BJ (cell line): ENCODE measurements at regions of chr1 and their contacts with region 1.

Region 1: GRCh38 chr1:7667625-7668218 is 103.4 kb upstream of the VAMP3 start:
- DNase-seq: no peak
- H3K4me3 ChIP-seq: no peak overlapping the region
- H3K27me3 ChIP-seq: peaks cover 2% of the 10 kb centered on the region; the same call in 1 of the 2 replicates
- CTCF ChIP-seq: peak; percentile 100

Region 2: DNA sequence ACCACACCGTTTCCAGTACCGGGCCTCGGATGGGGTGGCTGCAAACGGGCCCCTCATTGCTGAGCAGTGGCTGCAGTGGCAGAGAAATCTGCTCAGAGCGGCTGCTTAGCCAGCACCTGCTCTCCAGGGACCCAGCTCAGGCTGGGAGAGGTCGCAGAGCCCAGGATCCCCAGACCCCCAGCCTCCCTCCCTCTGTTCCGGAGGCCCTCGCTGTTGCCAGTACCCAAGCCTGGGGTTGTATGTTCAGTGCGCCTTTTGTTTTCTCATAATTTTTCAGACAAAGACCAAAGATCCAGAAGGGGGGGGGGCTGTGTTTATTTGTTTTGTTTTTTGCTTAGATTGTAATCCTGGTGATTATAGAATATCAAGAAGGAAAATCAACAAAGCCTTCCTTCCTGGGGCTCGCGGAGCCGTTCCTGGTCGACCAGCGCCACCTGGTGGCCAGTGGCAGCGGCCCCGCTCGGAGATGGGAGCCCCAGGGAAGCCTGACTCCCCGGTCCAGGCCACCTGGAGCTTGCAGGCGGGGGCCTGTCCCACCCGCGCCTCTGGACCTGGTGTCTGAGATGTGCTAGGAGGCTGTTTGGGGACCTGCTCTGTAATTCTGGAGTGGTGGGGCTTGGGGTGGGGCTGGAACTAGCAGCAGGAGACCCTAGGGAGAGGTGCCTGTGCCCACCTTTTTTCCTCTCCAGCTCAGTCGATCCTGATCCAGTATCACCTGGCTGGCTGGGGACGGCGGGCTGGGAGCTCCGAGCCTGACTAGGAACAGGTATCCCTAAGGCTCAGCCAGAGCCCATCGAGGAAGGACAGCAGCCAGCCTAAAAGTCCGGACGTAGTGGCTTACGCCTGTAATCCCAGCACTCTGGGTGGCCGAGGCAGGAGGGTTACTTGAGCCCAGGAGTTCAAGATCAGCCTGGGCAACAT is 20.5 kb before region 1 on chr1:
- CTCF ChIA-PET with region 1: interaction called, 21 read pairs
- POLR2A ChIA-PET with region 1: no interaction called
- DNase-seq: no peak
- H3K4me3 ChIP-seq: no peak overlapping the region
- H3K27me3 ChIP-seq: peaks cover 2% of the 10 kb centered on the region
- CTCF ChIP-seq: peak; percentile 94

Region 3: GRCh38 chr1:7680207-7680954 is 12.7 kb after region 1 on chr1:
- CTCF ChIA-PET with region 1: interaction called, 113 read pairs
- POLR2A ChIA-PET with region 1: no interaction called
- DNase-seq: no peak
- H3K4me3 ChIP-seq: peak overlapping the region; percentile 71
- H3K27me3 ChIP-seq: peaks cover 3% of the 10 kb centered on the region; the same call in 1 of the 2 replicates
- CTCF ChIP-seq: no peak

Region 4: GRCh38 chr1:7704214-7705047 is 36.7 kb after region 1 on chr1:
- CTCF ChIA-PET with region 1: interaction called, 23 read pairs
- POLR2A ChIA-PET with region 1: interaction called, 3 read pairs
- DNase-seq: peak; percentile 11
- H3K4me3 ChIP-seq: peak overlapping the region; percentile 23
- H3K27me3 ChIP-seq: peaks cover 26% of the 10 kb centered on the region
- CTCF ChIP-seq: no peak

Region 5: GRCh38 chr1:7752512-7753417 is 85.0 kb after region 1 on chr1:
- CTCF ChIA-PET with region 1: interaction called, 431 read pairs
- POLR2A ChIA-PET with region 1: interaction called, 3 read pairs
- DNase-seq: peak; percentile 15
- H3K4me3 ChIP-seq: peak overlapping the region; percentile 23
- H3K27me3 ChIP-seq: no peaks in the 10 kb centered on the region; the same call in 1 of the 2 replicates
- CTCF ChIP-seq: peak; percentile 76

Region 6: GRCh38 chr1:7770997-7771822 is 103.5 kb after region 1 on chr1 and contains the start of gene VAMP3:
- CTCF ChIA-PET with region 1: interaction called, 22 read pairs
- POLR2A ChIA-PET with region 1: no interaction called
- DNase-seq: no peak
- H3K4me3 ChIP-seq: peak within 1 kb of the TSS; percentile 65
- H3K27me3 ChIP-seq: no peaks in the 10 kb centered on the region
- CTCF ChIP-seq: no peak
- polyA plus RNA-seq, gene VAMP3: 106 and 162 TPM in 2 replicates